Activated CD4-positive, alpha-beta memory T cell treated with anti-CD3 and anti-CD28 coated beads for 36 hours (primary cell): ENCODE measurements at regions of chr3 and their contacts with region 1.

Region 1: DNA sequence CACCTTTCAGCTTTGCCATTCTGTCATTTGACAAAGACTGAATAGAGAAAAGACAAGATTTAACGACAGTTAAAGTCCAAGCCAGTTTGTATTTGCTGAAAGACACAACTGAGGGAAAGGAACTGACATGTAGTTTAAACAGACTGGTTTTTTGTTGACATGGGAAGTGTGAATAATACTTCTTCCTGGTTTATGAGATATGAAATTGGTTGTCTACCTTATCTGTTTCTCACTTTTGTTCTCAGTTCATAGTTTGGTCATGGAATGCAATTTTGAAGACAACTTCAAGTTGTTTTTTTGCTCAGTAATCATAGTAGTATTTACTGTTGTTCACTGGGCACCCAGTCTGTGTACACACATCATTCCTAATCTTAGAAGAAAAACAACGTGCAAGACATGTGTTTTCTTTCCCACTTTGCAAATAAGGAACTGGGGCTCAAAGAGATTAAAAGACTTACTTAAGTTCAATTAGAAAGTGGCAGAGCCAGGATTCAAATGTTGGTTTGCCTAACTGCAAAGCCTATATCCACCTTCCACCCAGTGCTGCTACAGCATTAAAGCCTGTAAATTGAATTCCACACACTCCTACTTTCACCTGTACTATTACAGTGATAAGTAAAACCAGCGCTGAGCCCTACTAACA is 103.5 kb downstream of the LPP start:
- DNase-seq: no peak
- H3K4me3 Mint-ChIP-seq: no peak overlapping the region
- H3K27ac Mint-ChIP-seq: peak overlapping the region; percentile 47
- H3K4me1 Mint-ChIP-seq: peaks cover 49% of the 10 kb centered on the region
- H3K27me3 Mint-ChIP-seq: no peaks in the 10 kb centered on the region

Region 2: GRCh38 chr3:188156056-188156455 is 101.4 kb before region 1 on chr3:
- CTCF ChIA-PET with region 1: no interaction called
- POLR2A ChIA-PET with region 1: no interaction called
- intact Hi-C with region 1: no loop called
- DNase-seq: peak; percentile 63
- H3K4me3 Mint-ChIP-seq: peak overlapping the region; percentile 88
- H3K27ac Mint-ChIP-seq: peak overlapping the region; percentile 97
- H3K4me1 Mint-ChIP-seq: peaks cover 71% of the 10 kb centered on the region
- H3K27me3 Mint-ChIP-seq: no peaks in the 10 kb centered on the region

Region 3: GRCh38 chr3:188170461-188171459 is 86.7 kb before region 1 on chr3:
- CTCF ChIA-PET with region 1: no interaction called
- POLR2A ChIA-PET with region 1: interaction called, 4 read pairs
- intact Hi-C with region 1: loop called (anchors 1 kb)
- DNase-seq: peak; percentile 82
- H3K4me3 Mint-ChIP-seq: peak overlapping the region; percentile 28
- H3K27ac Mint-ChIP-seq: peak overlapping the region; percentile 89
- H3K4me1 Mint-ChIP-seq: peaks cover 58% of the 10 kb centered on the region
- H3K27me3 Mint-ChIP-seq: no peaks in the 10 kb centered on the region

Region 4: GRCh38 chr3:188202358-188203138 is 55.0 kb before region 1 on chr3:
- CTCF ChIA-PET with region 1: no interaction called
- POLR2A ChIA-PET with region 1: no interaction called
- intact Hi-C with region 1: loop called (anchors 1 kb)
- DNase-seq: peak; percentile 46
- H3K4me3 Mint-ChIP-seq: no peak overlapping the region
- H3K27ac Mint-ChIP-seq: no peak overlapping the region
- H3K4me1 Mint-ChIP-seq: peaks cover 8% of the 10 kb centered on the region
- H3K27me3 Mint-ChIP-seq: no peaks in the 10 kb centered on the region

Region 5: DNA sequence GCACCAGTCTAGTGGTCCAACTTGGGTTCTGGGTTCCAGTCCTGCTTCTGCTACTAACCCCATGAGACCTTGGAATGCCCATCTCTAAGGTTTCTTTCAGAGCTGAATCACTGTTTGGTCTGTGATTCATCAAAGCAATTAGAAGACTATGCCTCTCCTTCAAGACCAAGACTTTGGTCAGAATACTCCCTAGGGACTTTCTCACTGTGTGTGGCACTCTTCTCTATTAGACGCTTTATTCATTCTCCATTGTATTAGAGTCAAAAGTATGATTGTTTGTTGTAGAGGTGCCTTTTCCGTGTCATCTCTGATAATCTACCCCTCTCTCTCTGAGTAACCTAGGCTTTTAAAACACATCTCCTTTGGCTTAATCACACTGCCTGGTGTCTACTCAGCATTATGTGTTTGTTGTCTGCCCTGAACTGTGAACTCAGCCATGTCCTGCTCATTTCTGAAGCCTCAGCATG is 13.1 kb before region 1 on chr3:
- CTCF ChIA-PET with region 1: no interaction called
- POLR2A ChIA-PET with region 1: no interaction called
- intact Hi-C with region 1: loop called (anchors 1 kb)
- DNase-seq: no peak
- H3K4me3 Mint-ChIP-seq: no peak overlapping the region
- H3K27ac Mint-ChIP-seq: no peak overlapping the region
- H3K4me1 Mint-ChIP-seq: peaks cover 25% of the 10 kb centered on the region
- H3K27me3 Mint-ChIP-seq: no peaks in the 10 kb centered on the region

Region 6: DNA sequence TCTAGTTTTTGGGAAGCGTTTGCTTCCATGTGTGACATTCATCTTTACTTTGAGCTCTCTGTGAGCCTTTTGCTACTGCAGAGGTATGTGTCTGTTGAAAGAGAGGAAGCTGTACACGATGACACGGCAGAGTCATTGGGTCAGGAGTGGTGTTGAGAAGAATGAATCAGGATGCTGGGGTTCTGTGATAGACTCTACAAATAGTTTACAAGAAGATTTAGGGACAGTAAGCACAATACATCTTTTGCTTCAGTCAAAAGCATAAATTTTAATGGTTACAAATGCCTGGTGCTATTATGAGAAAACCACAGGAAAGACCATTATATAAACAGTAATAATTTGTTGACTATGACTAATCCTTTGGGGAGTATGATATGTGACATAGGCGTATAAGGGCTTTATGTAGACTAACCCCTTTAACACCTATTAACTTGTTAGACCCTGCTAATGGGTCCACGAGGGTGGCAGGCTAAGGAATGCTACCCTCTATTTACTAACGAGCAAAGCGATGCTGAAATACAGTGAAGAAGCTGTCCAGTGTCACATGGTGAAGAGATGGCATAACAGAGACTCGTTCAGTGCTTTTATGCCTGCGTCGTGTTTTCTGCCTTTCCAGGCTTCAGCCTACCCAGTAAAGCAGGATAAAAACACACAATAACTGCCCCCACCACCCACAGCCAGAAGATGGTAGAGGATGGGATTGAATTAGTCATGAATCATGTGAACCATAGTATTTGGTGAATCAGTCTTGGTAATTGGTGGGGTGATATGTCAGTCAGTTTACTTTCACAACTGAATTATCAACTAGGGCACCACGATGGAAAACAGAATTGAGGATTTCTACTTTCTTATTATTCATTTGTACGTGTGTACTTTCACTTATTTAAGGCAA is 15.2 kb after region 1 on chr3:
- CTCF ChIA-PET with region 1: interaction called, 3 read pairs
- POLR2A ChIA-PET with region 1: no interaction called
- intact Hi-C with region 1: loop called (anchors 2 kb)
- DNase-seq: no peak
- H3K4me3 Mint-ChIP-seq: no peak overlapping the region
- H3K27ac Mint-ChIP-seq: no peak overlapping the region
- H3K4me1 Mint-ChIP-seq: peaks cover 34% of the 10 kb centered on the region
- H3K27me3 Mint-ChIP-seq: no peaks in the 10 kb centered on the region